CD4-positive, alpha-beta memory T cell (primary cell): ENCODE measurements at regions of chr10 and their contacts with region 1.

Region 1: DNA sequence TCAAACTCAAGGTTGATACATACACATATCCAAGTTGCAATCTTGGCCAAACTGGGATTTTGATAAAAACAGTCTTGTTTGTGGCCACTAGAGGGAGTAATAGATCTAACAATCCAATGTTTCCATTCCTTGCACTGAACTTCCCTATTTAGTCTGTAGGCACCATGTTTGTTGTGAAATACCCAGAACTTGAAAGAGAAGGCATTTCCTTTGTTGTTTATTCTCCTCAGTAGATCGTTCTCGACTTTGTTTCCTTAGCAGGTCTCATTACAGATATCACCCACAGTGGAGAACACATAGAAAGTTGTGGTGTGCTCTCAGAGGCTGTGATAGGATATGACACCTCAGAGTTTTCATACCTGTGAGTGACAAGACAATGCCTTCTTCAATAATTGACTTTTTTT is 70.3 kb upstream of the MXI1 start:
- DNase-seq: peak; percentile 46 to 70 (median 66)
- H3K4me3 ChIP-seq: no peak overlapping the region
- H3K4me3 Mint-ChIP-seq: peak overlapping the region in 1 of 8 donors; percentile 0
- H3K27ac ChIP-seq: peak overlapping the region; percentile 7
- H3K27ac Mint-ChIP-seq: peak overlapping the region; percentile 7 to 83 (median 18)
- H3K4me1 ChIP-seq: peaks cover 24% of the 10 kb centered on the region
- H3K4me1 Mint-ChIP-seq: peaks cover 17 to 30% (median 26%) of the 10 kb centered on the region in 4 donors
- H3K27me3 ChIP-seq: no peaks in the 10 kb centered on the region
- H3K27me3 Mint-ChIP-seq: no peaks in the 10 kb centered on the region

Region 2: DNA sequence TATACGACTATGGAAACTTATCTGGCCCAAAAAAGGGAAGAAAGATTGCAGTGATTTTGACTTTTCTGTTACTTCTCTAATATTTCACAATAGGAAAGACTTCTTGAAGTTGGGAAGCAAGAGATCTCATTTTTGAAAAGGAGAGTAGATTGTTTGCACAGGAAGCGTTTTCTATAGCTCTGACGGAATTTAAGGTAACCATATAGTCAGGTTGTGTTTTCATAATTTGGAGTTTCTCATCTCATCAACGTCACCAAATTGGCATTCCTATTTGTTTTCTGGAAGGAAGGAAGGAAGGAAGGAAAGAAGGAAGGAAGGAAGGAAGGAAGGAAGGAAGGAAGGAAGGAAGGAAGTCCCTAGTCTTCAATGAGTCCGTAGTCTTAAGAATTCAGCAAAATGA is 945.8 kb before region 1 on chr10:
- CTCF ChIA-PET with region 1: no interaction called
- POLR2A ChIA-PET with region 1: no interaction called
- intact Hi-C with region 1: no loop called
- DNase-seq: no peak
- H3K4me3 ChIP-seq: no peak overlapping the region
- H3K4me3 Mint-ChIP-seq: no peak overlapping the region
- H3K27ac ChIP-seq: no peak overlapping the region
- H3K27ac Mint-ChIP-seq: no peak overlapping the region
- H3K4me1 ChIP-seq: no peaks in the 10 kb centered on the region
- H3K4me1 Mint-ChIP-seq: no peaks in the 10 kb centered on the region
- H3K27me3 ChIP-seq: no peaks in the 10 kb centered on the region
- H3K27me3 Mint-ChIP-seq: no peaks in the 10 kb centered on the region

Region 3: DNA sequence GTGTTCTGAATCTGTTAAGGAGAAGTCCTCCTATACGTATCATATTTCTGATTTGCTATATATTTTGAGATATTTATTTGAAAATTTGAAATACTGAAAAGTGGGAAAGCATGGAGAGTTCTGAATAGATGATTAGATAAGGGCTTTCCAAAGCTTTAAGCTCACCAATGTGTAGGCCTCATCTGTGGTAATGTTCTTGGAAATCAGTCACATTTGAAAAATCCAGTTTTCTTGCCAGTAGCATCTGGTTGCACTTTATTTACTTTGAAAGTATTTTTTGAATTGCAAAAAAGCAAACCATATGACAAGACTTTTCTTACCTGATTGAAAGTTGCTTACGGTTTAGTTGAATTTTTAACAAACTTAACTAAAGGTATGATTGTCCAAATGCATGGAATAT is 107.7 kb before region 1 on chr10:
- CTCF ChIA-PET with region 1: no interaction called
- POLR2A ChIA-PET with region 1: no interaction called
- intact Hi-C with region 1: no loop called
- DNase-seq: no peak
- H3K4me3 ChIP-seq: no peak overlapping the region
- H3K4me3 Mint-ChIP-seq: no peak overlapping the region
- H3K27ac ChIP-seq: no peak overlapping the region
- H3K27ac Mint-ChIP-seq: no peak overlapping the region
- H3K4me1 ChIP-seq: peaks cover 63% of the 10 kb centered on the region
- H3K4me1 Mint-ChIP-seq: peaks cover 44 to 70% (median 56%) of the 10 kb centered on the region in 4 donors
- H3K27me3 ChIP-seq: no peaks in the 10 kb centered on the region
- H3K27me3 Mint-ChIP-seq: no peaks in the 10 kb centered on the region

Region 4: GRCh38 chr10:110225756-110226542 is 88.8 kb after region 1 on chr10:
- CTCF ChIA-PET with region 1: interaction called, 54 read pairs
- POLR2A ChIA-PET with region 1: interaction called, 7 read pairs
- intact Hi-C with region 1: loop called (anchors 1 kb)
- DNase-seq: peak; percentile 88 to 90 (median 89)
- H3K4me3 ChIP-seq: peak overlapping the region; percentile 39 to 82
- H3K4me3 Mint-ChIP-seq: peak overlapping the region; percentile 92 to 96 (median 94)
- H3K27ac ChIP-seq: peak overlapping the region; percentile 67
- H3K27ac Mint-ChIP-seq: peak overlapping the region; percentile 91 to 96 (median 96)
- H3K4me1 ChIP-seq: peaks cover 29% of the 10 kb centered on the region
- H3K4me1 Mint-ChIP-seq: peaks cover 27 to 62% (median 42%) of the 10 kb centered on the region in 4 donors
- H3K27me3 ChIP-seq: no peaks in the 10 kb centered on the region
- H3K27me3 Mint-ChIP-seq: no peaks in the 10 kb centered on the region

Region 5: GRCh38 chr10:110279407-110279986 is 142.4 kb after region 1 on chr10:
- CTCF ChIA-PET with region 1: interaction called, 61 read pairs
- POLR2A ChIA-PET with region 1: interaction called, 11 read pairs
- intact Hi-C with region 1: loop called (anchors 1 kb)
- DNase-seq: peak; percentile 54 to 58 (median 58)
- H3K4me3 ChIP-seq: no peak overlapping the region
- H3K4me3 Mint-ChIP-seq: peak overlapping the region in 2 of 8 donors; percentile 32 to 58
- H3K27ac ChIP-seq: no peak overlapping the region
- H3K27ac Mint-ChIP-seq: peak overlapping the region in 1 of 7 donors; percentile 51
- H3K4me1 ChIP-seq: peaks cover 22% of the 10 kb centered on the region
- H3K4me1 Mint-ChIP-seq: peaks cover 18 to 50% (median 36%) of the 10 kb centered on the region in 4 donors
- H3K27me3 ChIP-seq: no peaks in the 10 kb centered on the region
- H3K27me3 Mint-ChIP-seq: no peaks in the 10 kb centered on the region

Region 6: GRCh38 chr10:110354322-110354766 is 217.2 kb after region 1 on chr10:
- CTCF ChIA-PET with region 1: interaction called, 4 read pairs
- POLR2A ChIA-PET with region 1: no interaction called
- intact Hi-C with region 1: loop called (anchors 5 kb)
- DNase-seq: peak; percentile 70 to 78 (median 77)
- H3K4me3 ChIP-seq: no peak overlapping the region
- H3K4me3 Mint-ChIP-seq: peak overlapping the region in 7 of 8 donors; percentile 44 to 75 (median 53)
- H3K27ac ChIP-seq: peak overlapping the region; percentile 81
- H3K27ac Mint-ChIP-seq: peak overlapping the region; percentile 93 to 100 (median 100)
- H3K4me1 ChIP-seq: peaks cover 53% of the 10 kb centered on the region
- H3K4me1 Mint-ChIP-seq: peaks cover 43 to 57% (median 52%) of the 10 kb centered on the region in 4 donors
- H3K27me3 ChIP-seq: no peaks in the 10 kb centered on the region
- H3K27me3 Mint-ChIP-seq: no peaks in the 10 kb centered on the region